ENCODE measurements at regions of chr6 and their contacts with region 1.

Region 1: DNA sequence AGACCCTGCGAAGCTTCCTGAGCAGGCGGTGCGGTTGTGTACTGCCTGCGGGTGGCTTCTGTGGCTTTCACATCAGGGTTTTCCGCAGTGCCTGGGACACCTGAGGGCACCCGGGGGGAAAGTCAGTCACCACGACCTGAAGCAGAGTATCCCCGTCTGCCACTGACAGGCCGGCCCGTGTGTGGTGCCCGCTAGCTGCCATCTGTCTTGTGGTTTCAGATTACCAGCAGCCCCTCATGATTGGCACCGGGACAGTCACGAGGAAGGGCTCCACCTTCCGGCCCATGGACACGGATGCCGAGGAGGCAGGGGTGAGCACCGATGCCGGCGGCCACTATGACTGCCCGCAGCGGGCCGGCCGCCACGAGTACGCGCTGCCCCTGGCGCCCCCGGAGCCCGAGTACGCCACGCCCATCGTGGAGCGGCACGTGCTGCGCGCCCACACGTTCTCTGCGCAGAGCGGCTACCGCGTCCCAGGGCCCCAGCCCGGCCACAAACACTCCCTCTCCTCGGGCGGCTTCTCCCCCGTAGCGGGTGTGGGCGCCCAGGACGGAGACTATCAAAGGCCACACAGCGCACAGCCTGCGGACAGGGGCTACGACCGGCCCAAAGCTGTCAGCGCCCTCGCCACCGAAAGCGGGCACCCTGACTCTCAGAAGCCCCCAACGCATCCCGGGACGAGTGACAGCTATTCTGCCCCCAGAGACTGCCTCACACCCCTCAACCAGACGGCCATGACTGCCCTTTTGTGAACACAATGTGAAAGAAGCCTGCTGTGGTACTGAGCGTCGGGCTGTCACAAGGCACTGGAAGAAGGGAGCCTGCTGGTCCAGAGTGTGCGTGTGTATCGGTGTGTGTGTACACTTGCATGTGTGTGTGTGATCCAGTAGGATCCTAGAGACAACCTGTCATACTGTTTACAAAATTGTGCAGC is 54.4 kb downstream of the GOPC start:
- DNase-seq: peak; percentile 32 to 74 (median 43)
- H3K4me3 ChIP-seq: peak overlapping the region; percentile 50 to 73
- H3K4me3 Mint-ChIP-seq: peak overlapping the region; percentile 82 to 91 (median 88)
- H3K27ac ChIP-seq: peak overlapping the region; percentile 41
- H3K27ac Mint-ChIP-seq: peak overlapping the region; percentile 86 to 98 (median 92)
- H3K4me1 ChIP-seq: peaks cover 38% of the 10 kb centered on the region
- H3K4me1 Mint-ChIP-seq: peaks cover 26 to 49% (median 40%) of the 10 kb centered on the region in 4 donors
- H3K27me3 ChIP-seq: no peaks in the 10 kb centered on the region
- H3K27me3 Mint-ChIP-seq: no peaks in the 10 kb centered on the region

Region 2: DNA sequence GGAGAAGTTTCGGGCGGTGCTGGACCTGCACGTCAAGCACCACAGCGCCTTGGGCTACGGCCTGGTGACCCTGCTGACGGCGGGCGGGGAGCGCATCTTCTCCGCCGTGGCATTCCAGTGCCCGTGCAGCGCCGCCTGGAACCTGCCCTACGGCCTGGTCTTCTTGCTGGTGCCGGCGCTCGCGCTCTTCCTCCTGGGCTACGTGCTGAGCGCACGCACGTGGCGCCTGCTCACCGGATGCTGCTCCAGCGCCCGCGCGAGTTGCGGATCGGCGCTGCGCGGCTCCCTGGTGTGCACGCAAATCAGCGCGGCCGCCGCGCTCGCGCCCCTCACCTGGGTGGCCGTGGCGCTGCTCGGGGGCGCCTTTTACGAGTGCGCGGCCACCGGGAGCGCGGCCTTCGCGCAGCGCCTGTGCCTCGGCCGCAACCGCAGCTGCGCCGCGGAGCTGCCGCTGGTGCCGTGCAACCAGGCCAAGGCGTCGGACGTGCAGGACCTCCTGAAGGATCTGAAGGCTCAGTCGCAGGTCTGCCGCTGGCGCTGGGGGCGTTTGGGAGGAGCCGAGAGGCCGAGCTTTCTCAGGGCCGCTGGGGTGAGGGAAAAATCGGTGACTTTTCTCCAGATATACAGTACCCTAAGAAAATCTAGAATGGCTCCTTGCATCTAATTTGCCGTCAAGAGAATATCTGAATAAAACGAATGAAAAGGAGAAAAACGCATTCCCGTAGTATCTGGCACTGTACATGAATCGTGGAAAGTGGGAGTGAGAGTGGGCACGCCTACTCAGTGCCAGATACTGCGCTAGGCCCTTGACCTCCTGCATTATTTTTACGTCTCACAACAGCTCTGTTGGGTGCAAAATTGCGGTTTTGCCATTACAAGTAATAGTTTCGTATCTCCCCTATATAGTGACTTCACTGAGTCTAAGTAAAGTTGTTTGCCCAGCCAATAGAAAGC is 1085.7 kb before region 1 on chr6:
- CTCF ChIA-PET with region 1: no interaction called
- POLR2A ChIA-PET with region 1: no interaction called
- intact Hi-C with region 1: no loop called
- DNase-seq: peak; percentile 46 to 68 (median 60)
- H3K4me3 ChIP-seq: peak overlapping the region; percentile 26 to 54
- H3K4me3 Mint-ChIP-seq: peak overlapping the region; percentile 72 to 87 (median 82)
- H3K27ac ChIP-seq: no peak overlapping the region
- H3K27ac Mint-ChIP-seq: peak overlapping the region in 6 of 7 donors; percentile 14 to 87 (median 68)
- H3K4me1 ChIP-seq: peaks cover 14% of the 10 kb centered on the region
- H3K4me1 Mint-ChIP-seq: peaks cover 12 to 37% (median 34%) of the 10 kb centered on the region in 4 donors
- H3K27me3 ChIP-seq: no peaks in the 10 kb centered on the region
- H3K27me3 Mint-ChIP-seq: peaks cover 10 to 17% of the 10 kb centered on the region in 2 donors

Region 3: DNA sequence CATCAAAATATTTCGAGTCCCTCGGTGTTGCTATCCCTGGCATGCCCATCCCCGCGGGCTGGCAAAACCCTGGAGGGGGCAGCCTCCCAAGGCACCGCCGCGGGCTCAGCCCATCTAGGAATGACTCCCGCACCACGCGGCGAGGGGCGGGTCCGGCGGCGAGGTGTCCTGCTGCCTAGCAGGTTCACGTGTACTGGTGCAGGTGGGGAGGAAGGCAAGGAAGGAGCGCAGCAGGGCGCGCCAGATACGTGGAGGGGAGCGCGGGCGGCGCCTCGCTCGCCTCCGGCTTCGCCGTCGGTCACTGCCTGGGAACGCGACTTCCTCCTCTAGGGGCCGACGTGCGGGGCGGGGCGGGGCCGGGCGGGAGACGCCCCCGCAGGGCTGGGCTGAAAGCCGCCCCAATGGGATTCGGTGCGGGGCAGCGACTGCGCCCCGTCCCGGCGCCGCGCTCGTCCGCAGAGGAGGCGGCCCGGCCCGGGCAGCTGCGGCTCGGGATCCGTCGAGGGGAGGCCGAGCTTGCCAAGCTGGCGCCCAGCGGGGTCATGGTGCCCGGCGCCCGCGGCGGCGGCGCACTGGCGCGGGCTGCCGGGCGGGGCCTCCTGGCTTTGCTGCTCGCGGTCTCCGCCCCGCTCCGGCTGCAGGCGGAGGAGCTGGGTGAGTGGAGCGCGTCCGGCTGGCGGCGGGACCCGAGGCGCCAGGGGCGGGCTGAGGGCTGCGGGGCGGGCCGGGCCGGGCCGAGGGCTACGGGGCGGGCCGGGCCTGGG is 65.5 kb before region 1 on chr6 and contains the start of gene DCBLD1:
- CTCF ChIA-PET with region 1: interaction called, 72 read pairs
- POLR2A ChIA-PET with region 1: interaction called, 75 read pairs
- intact Hi-C with region 1: loop called (anchors 1 kb)
- DNase-seq: peak; percentile 46 to 62 (median 55)
- H3K4me3 ChIP-seq: peak within 1 kb of the TSS; percentile 38 to 57
- H3K4me3 Mint-ChIP-seq: peak within 1 kb of the TSS; percentile 91 to 98 (median 94)
- H3K27ac ChIP-seq: peak within 1 kb of the TSS; percentile 36
- H3K27ac Mint-ChIP-seq: peak within 1 kb of the TSS; percentile 71 to 85 (median 79)
- H3K4me1 ChIP-seq: peaks cover 21% of the 10 kb centered on the region
- H3K4me1 Mint-ChIP-seq: peaks cover 13 to 18% (median 14%) of the 10 kb centered on the region in 4 donors
- H3K27me3 ChIP-seq: no peaks in the 10 kb centered on the region
- H3K27me3 Mint-ChIP-seq: peaks cover 5 to 15% of the 10 kb centered on the region in 2 donors
- total RNA-seq, gene DCBLD1: 8.7 to 9.7 TPM

Measured in CD4-positive, alpha-beta memory T cell (primary cell).